Activated B cell treated with CpG ODN at 0.5 μM for 24 hours (primary cell): ENCODE measurements at regions of chr16 and their contacts with region 1.

Region 1: DNA sequence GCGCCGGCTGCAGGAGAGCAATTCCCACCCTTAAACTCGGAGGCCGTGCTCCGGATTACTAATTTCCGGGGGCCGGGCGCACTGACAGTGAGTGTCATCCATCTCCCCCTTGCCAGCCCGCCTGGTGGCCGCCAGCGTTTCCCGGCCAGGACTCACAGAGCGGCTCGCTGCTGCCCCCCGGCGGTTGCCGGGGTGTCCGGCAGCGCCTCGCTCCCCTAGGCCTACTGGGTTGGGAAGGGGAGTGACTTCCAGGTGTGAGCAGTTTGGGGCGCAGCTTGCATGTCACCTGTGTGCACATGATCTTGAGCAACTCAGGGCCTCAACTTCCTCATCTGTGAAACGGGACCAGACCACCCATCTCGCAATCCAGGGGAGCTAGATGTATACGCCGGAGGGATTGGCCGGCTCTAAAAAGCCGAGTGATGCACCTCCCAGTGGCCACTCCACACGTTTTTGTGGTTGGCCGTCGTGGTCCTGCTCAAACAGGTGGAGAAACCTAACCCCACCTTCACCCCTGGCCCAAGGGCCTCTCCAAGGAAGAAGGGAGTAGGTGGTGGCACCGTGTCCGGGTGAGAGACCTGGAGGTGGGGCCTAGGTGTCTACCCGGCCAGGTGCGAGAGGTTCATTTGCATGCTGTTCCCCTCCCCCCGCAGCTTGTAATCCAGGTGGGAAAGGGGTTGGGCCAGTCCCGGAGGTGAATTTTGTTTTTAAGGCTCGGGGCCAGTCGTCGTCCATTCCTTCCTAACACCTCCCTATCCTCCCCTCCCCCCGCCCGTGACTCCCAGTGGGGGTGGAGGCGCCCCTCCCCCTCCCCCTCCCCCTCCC is 2.4 kb upstream of the GSE1 start:
- DNase-seq: peak; percentile 89
- ATAC-seq: peak; percentile 62
- H3K4me3 Mint-ChIP-seq: peak overlapping the region; percentile 81
- H3K27ac Mint-ChIP-seq: peak overlapping the region; percentile 70
- H3K4me1 Mint-ChIP-seq: peaks cover 63% of the 10 kb centered on the region
- H3K27me3 Mint-ChIP-seq: no peaks in the 10 kb centered on the region
- CTCF ChIP-seq: peak; percentile 77

Region 2: DNA sequence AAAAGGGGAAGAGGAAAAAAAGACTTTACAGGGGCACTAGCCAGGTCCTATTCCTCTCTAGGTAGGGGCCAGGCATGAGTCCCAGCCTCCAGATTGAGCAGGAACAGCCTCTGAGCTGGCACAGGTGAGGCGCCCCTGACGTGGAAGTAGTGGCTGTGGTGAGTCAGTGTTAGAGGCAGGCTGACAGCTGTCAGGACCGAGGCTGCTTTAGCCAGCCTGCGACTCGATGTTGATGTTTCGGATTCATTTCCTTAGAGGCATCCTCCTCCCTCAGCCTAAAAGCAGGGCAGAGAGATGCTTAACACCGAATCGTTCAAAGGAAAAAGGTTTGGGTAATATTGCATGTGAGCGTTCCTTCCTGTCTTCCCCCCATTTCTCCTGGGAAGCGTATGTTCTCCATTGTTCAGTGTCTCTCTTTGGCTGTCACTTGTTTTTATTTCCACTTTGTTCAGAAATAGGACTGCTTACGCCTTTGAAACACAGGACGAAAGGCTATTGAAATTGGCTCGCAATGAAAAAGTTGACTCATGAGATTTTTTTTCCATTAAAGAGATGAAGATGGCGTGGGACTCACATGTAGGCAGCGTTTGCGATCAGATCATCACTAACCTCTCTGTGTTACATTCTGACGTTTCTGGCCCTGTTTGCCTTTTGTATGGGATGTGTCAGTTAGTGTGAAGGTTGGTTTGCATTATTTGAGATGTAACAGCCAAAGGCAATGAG is 581.9 kb before region 1 on chr16:
- CTCF ChIA-PET with region 1: no interaction called
- POLR2A ChIA-PET with region 1: no interaction called
- intact Hi-C with region 1: no loop called
- DNase-seq: peak; percentile 22
- ATAC-seq: peak; percentile 23
- H3K4me3 Mint-ChIP-seq: peak overlapping the region; percentile 84
- H3K27ac Mint-ChIP-seq: peak overlapping the region; percentile 41
- H3K4me1 Mint-ChIP-seq: peaks cover 42% of the 10 kb centered on the region
- H3K27me3 Mint-ChIP-seq: peaks cover 11% of the 10 kb centered on the region
- CTCF ChIP-seq: no peak

Region 3: GRCh38 chr16:85369741-85370528 is 240.8 kb before region 1 on chr16:
- CTCF ChIA-PET with region 1: interaction called, 8 read pairs
- POLR2A ChIA-PET with region 1: no interaction called
- intact Hi-C with region 1: loop called (anchors 1 kb)
- DNase-seq: peak; percentile 54
- ATAC-seq: peak; percentile 40
- H3K4me3 Mint-ChIP-seq: no peak overlapping the region
- H3K27ac Mint-ChIP-seq: no peak overlapping the region
- H3K4me1 Mint-ChIP-seq: no peaks in the 10 kb centered on the region
- H3K27me3 Mint-ChIP-seq: peaks cover 5% of the 10 kb centered on the region
- CTCF ChIP-seq: no peak

Region 4: GRCh38 chr16:85420501-85421337 is 190.0 kb before region 1 on chr16:
- CTCF ChIA-PET with region 1: interaction called, 51 read pairs
- POLR2A ChIA-PET with region 1: interaction called, 5 read pairs
- intact Hi-C with region 1: loop called (anchors 1 kb)
- DNase-seq: peak; percentile 80
- ATAC-seq: peak; percentile 78
- H3K4me3 Mint-ChIP-seq: no peak overlapping the region
- H3K27ac Mint-ChIP-seq: no peak overlapping the region
- H3K4me1 Mint-ChIP-seq: no peaks in the 10 kb centered on the region
- H3K27me3 Mint-ChIP-seq: peaks cover 14% of the 10 kb centered on the region
- CTCF ChIP-seq: peak; percentile 99

Region 5: GRCh38 chr16:85479972-85480751 is 130.6 kb before region 1 on chr16:
- CTCF ChIA-PET with region 1: interaction called, 22 read pairs
- POLR2A ChIA-PET with region 1: interaction called, 4 read pairs
- intact Hi-C with region 1: loop called (anchors 1 kb)
- DNase-seq: peak; percentile 49
- ATAC-seq: peak; percentile 68
- H3K4me3 Mint-ChIP-seq: no peak overlapping the region
- H3K27ac Mint-ChIP-seq: no peak overlapping the region
- H3K4me1 Mint-ChIP-seq: peaks cover 15% of the 10 kb centered on the region
- H3K27me3 Mint-ChIP-seq: peaks cover 15% of the 10 kb centered on the region
- CTCF ChIP-seq: no peak

Region 6: GRCh38 chr16:85528528-85529387 is 82.0 kb before region 1 on chr16:
- CTCF ChIA-PET with region 1: interaction called, 16 read pairs
- POLR2A ChIA-PET with region 1: no interaction called
- intact Hi-C with region 1: loop called (anchors 1 kb)
- DNase-seq: no peak
- ATAC-seq: peak; percentile 60
- H3K4me3 Mint-ChIP-seq: no peak overlapping the region
- H3K27ac Mint-ChIP-seq: no peak overlapping the region
- H3K4me1 Mint-ChIP-seq: no peaks in the 10 kb centered on the region
- H3K27me3 Mint-ChIP-seq: peaks cover 6% of the 10 kb centered on the region
- CTCF ChIP-seq: no peak

Region 7: DNA sequence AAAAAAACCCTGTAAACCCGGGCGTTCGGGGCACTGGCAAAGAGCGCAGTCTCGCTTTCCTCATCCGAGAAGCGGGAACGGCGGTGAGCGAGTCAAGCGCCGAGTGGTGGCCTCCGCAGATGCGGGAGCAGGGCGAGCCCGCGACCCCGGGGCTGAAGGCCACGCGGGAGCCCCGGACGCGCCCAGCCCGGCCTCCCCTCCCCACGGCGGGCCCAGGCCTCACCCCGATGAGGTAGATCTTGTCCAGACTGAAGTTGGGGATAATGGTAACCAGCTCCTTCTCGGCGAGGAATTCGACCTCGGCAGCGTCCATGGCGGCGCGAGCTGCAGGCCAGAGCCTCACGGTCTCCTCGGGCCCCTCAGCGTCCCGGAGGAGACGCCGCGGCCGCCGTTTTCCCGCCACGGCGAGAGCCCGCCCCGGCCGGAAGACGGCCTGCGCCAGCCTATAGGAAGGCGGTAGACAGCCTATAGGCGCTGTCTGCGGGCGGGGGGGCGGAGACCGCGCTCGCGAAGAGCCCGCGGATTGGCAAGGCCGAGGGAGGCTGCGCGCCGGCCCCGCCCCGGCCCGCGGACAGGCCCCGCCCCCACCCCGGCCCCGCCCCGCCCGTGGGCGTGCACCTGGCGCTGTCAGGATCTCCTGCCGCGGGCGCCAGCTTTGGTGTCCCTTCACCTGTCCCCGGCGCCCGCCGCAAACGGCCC is 78.0 kb after region 1 on chr16 and contains the start of gene GINS2:
- CTCF ChIA-PET with region 1: interaction called, 3 read pairs
- POLR2A ChIA-PET with region 1: interaction called, 5 read pairs
- intact Hi-C with region 1: loop called (anchors 5 kb)
- DNase-seq: peak; percentile 78
- ATAC-seq: peak; percentile 100
- H3K4me3 Mint-ChIP-seq: peak within 1 kb of the TSS; percentile 78
- H3K27ac Mint-ChIP-seq: no peak within 1 kb of the TSS
- H3K4me1 Mint-ChIP-seq: peaks cover 24% of the 10 kb centered on the region
- H3K27me3 Mint-ChIP-seq: no peaks in the 10 kb centered on the region
- CTCF ChIP-seq: no peak
- total RNA-seq, gene GINS2: 6.0 and 6.8 TPM in 2 replicates

Region 8: GRCh38 chr16:87387942-87388817 is 1777.5 kb after region 1 on chr16:
- CTCF ChIA-PET with region 1: no interaction called
- POLR2A ChIA-PET with region 1: no interaction called
- intact Hi-C with region 1: loop called (anchors 10 kb)
- DNase-seq: peak; percentile 59
- ATAC-seq: peak; percentile 62
- H3K4me3 Mint-ChIP-seq: peak overlapping the region; percentile 70
- H3K27ac Mint-ChIP-seq: peak overlapping the region; percentile 98
- H3K4me1 Mint-ChIP-seq: peaks cover 52% of the 10 kb centered on the region
- H3K27me3 Mint-ChIP-seq: peaks cover 2% of the 10 kb centered on the region
- CTCF ChIP-seq: no peak